ENCODE measurements at regions of chr9 and their contacts with region 1.

Region 1: GRCh38 chr9:131936929-131937328 is 142.7 kb downstream of the MED27 start:
- DNase-seq: no peak
- ATAC-seq: no peak
- H3K4me3 ChIP-seq: no peak overlapping the region
- H3K4me1 ChIP-seq: no peaks in the 10 kb centered on the region
- CTCF ChIP-seq: no peak

Region 2: GRCh38 chr9:131523451-131524435 is 413.2 kb before region 1 on chr9:
- intact Hi-C with region 1: no loop called
- DNase-seq: no peak
- ATAC-seq: peak; percentile 12
- H3K4me3 ChIP-seq: no peak overlapping the region
- H3K4me1 ChIP-seq: no peaks in the 10 kb centered on the region
- CTCF ChIP-seq: no peak

Region 3: DNA sequence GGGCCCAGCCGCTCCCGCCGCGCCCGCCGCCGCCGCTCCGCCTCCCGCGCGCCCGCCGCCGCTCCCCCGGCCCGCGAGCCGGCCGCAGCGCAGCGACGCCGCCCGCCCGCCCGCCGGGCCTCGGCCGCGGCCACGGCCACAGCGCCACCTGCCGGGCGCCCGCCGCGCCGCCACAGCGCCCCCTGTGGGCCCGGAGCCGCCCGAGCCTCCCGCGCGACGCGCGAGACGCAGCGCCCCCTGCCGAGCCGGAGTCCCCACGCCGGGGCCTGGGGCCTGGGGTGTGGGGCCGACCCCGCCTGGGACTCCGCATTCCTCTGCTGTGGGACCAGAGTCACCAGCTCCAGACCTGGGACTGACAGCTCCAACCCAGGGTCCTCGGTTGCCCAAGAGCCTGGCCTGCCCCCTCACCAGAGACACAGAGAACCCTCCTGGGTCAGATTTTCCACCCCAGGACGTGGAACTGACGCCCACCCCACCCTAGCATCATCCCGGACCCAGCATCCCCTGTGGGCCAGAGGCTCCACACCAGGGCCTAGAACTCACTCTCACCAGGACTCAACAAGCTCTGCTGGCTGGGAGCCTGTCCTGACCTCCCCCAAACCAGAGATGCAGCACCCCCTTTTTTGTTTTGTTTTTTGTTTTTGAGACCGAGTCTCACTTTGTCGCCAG is 196.8 kb before region 1 on chr9 and contains the start of gene RAPGEF1:
- intact Hi-C with region 1: no loop called
- DNase-seq: peak; percentile 73 to 88 (median 83)
- ATAC-seq: peak; percentile 87
- H3K4me3 ChIP-seq: peak within 1 kb of the TSS; percentile 50
- H3K4me1 ChIP-seq: peaks cover 36% of the 10 kb centered on the region
- CTCF ChIP-seq: peak; percentile 98
- total RNA-seq, gene RAPGEF1: 67.1 to 103 (median 84.2) TPM

Region 4: GRCh38 chr9:131872006-131872405 is 64.9 kb before region 1 on chr9:
- intact Hi-C with region 1: loop called in 1 of 2 experiments (anchors 10 kb)
- DNase-seq: no peak
- ATAC-seq: no peak
- H3K4me3 ChIP-seq: no peak overlapping the region
- H3K4me1 ChIP-seq: no peaks in the 10 kb centered on the region
- CTCF ChIP-seq: no peak